ENCODE measurements at regions of chr4 and their contacts with region 1.

Region 1: DNA sequence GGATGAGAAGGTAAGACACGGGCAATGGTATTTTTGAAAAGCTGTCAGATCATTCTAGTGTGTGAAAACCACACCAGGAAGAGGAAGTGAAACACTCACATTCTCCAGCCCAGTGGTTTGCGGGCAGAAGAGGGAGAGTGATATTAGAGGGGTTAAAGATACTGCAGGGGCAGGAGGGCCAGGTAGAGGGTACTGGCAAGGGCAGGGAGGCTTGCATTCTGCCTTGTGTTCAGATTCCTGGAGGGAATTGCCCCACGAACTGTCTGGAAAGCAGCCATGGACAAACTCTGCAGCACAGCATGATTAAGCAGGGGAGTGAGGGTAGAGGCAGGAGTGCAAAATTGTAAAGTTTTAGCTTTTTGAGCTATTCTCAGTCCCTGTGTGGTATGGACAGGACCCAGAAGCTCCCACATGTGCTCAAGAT is 30.9 kb downstream of the NIPAL1 start:
- DNase-seq: peak; percentile 91
- ATAC-seq: peak; percentile 92
- H3K4me3 Mint-ChIP-seq: peak overlapping the region; percentile 62
- H3K27ac Mint-ChIP-seq: peak overlapping the region; percentile 77
- H3K4me1 Mint-ChIP-seq: peaks cover 56% of the 10 kb centered on the region
- H3K27me3 Mint-ChIP-seq: peaks cover 27% of the 10 kb centered on the region

Region 2: GRCh38 chr4:47990145-47990544 is 57.3 kb before region 1 on chr4:
- CTCF ChIA-PET with region 1: no interaction called
- POLR2A ChIA-PET with region 1: no interaction called
- DNase-seq: no peak
- ATAC-seq: no peak
- H3K4me3 Mint-ChIP-seq: no peak overlapping the region
- H3K27ac Mint-ChIP-seq: no peak overlapping the region
- H3K4me1 Mint-ChIP-seq: peaks cover 11% of the 10 kb centered on the region
- H3K27me3 Mint-ChIP-seq: peaks cover 6% of the 10 kb centered on the region

Region 3: DNA sequence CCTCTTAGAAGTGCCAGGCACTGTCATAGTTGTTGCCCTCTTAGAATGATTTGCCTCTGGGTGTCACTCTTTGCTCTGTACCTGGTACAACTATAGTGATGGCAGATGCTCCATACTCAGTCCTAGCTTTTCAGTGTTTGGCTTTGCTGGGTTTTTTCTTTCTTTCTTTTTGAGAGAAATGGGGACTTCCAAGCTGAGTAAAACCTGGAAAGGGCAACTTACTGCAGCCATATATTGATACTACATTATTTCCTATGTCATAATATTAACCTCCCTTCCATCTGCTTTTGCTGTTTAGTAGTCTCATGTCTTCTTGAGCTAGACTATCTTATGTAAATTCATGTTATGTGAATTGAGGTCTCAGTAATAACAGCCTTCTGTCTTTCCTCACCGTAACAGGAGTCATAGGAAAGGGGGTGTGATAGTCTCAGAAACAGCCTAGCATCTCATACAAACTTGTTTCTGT is 18.2 kb after region 1 on chr4:
- CTCF ChIA-PET with region 1: interaction called, 11 read pairs
- POLR2A ChIA-PET with region 1: interaction called, 3 read pairs
- DNase-seq: no peak
- ATAC-seq: no peak
- H3K4me3 Mint-ChIP-seq: no peak overlapping the region
- H3K27ac Mint-ChIP-seq: no peak overlapping the region
- H3K4me1 Mint-ChIP-seq: peaks cover 23% of the 10 kb centered on the region
- H3K27me3 Mint-ChIP-seq: no peaks in the 10 kb centered on the region

Measured in activated CD8-positive, alpha-beta T cell treated with anti-CD3 and anti-CD28 coated beads, Interleukin-2, amount 10 ng/mL, durations not matched to agents 7 days and 5 days (primary cell).